Dendritic cell treated with granulocyte-macrophage colony-stimulating factor and Interleukin-4, amounts not matched to agents 40 ng/mL and 50 ng/mL, for 4 days (primary cell): ENCODE measurements at regions of chr7 and their contacts with region 1.

Region 1: DNA sequence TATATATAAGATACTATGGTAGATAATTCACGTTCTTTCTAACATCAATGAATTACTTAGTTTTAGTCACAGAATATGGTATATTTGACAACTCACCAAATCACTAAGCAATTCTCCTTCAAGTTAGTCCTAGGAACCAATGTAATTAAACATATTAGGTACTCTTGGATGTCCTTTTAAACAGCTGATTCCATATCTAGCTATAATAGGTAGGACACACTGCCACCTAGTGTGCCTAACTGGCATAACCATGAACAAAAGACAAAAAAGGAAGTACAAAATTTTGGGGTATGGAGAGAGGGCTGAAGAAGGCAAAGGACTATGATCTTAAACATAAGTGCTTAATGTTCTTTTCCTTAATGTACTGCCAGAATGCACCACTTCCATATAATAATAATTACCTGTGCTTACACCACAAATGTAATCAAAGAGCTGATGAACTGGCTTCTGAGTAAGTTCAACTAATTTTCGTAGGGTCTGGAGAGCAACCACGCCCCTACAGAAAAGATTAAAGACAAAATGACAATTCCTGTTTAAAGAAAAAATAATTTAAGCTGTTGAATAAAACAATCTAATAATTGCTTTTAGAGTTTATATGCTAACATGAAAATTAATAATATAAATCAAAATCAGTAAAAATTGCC is 28.7 kb downstream of the PNPLA8 start:
- H3K4me3 Mint-ChIP-seq: no peak overlapping the region
- H3K27ac Mint-ChIP-seq: no peak overlapping the region
- H3K4me1 Mint-ChIP-seq: peaks cover 3% of the 10 kb centered on the region
- H3K27me3 Mint-ChIP-seq: no peaks in the 10 kb centered on the region

Region 2: DNA sequence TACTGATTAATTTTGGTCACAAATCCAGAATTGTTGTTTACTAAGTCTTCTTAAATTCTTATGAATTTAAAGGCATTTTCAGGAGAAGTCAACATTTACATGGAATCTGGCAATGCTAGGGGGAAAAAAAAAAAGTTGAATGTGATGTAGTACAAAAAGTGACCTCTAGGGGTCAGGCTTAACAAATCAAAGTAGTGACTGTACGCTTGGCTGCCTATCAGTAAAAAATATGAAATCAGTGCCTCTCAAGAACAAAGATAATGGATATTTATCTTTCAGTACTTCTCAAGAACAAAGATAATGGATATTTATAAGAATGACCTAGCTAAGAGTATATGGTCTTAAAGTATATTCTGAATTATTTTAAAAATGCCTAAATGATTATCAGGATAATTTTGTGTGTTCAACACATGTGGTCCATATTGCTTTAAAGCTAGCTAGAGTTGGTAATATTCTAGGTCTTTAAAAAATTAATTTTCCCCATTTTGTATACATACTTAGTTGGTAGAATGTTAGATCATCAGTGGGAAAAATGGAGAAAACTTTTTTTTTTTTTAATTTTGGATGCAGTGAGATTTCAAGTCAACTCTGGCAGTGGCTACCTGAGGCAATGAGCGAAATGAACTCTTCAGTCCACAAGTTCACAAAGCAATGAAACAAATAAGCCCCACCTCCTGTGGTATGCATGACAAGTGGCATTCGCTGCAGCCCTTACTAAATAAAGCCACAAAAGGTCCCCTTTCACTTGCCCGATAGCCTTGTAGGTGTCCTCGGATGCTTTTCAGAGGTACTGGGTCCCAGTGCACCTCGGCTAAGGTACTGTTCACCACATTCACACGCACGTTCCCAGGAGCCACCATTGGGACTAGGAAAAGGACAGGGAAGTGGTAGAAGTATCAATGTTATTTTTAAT is 315.9 kb before region 1 on chr7:
- intact Hi-C with region 1: loop called (anchors 1 kb)
- H3K4me3 Mint-ChIP-seq: no peak overlapping the region
- H3K27ac Mint-ChIP-seq: no peak overlapping the region
- H3K4me1 Mint-ChIP-seq: no peaks in the 10 kb centered on the region
- H3K27me3 Mint-ChIP-seq: no peaks in the 10 kb centered on the region

Region 3: DNA sequence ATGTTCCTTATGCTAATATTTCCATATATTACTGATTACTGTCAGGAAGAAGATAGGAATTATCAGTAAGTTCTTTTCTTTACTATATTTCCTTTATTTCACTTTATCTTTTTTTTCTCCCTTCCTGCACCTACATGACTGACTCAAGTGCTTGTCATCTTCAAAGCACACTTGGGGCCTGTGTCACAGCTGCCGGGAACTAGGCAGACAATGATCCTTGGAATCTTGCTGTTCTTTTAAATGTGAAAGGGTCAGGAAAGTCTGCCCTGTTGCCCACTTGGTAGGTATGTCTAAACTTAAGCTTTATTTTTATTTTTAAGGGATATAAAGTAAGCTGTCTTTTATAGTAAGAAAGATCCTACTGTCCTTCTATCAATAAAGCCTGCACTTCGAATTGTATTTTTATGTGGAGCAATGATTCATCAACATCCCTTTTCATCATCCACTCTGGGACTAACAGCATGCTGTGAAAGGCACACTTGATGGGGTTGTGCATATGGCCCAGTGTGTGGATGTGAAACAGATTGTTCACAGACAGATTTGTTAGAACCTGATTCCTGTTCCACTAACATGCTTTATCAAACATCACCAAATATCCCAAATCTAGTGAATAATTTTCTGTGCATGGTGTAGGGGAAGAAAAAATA is 629.3 kb after region 1 on chr7:
- intact Hi-C with region 1: no loop called
- H3K4me3 Mint-ChIP-seq: no peak overlapping the region
- H3K27ac Mint-ChIP-seq: no peak overlapping the region
- H3K4me1 Mint-ChIP-seq: no peaks in the 10 kb centered on the region
- H3K27me3 Mint-ChIP-seq: no peaks in the 10 kb centered on the region